Naive thymus-derived CD4-positive, alpha-beta T cell (primary cell): ENCODE measurements at regions of chr9 and their contacts with region 1.

Region 1: GRCh38 chr9:101727612-101728524 is 10.6 kb downstream of the GRIN3A start:
- DNase-seq: peak in 4 of 9 donors; percentile 2 to 29 (median 16)
- ATAC-seq: no peak
- H3K4me3 ChIP-seq: no peak overlapping the region
- H3K4me3 Mint-ChIP-seq: no peak overlapping the region
- H3K27ac ChIP-seq: no peak overlapping the region
- H3K27ac Mint-ChIP-seq: no peak overlapping the region
- H3K4me1 ChIP-seq: no peaks in the 10 kb centered on the region
- H3K4me1 Mint-ChIP-seq: no peaks in the 10 kb centered on the region
- H3K27me3 ChIP-seq: no peaks in the 10 kb centered on the region
- H3K27me3 Mint-ChIP-seq: peaks cover 4 to 22% (median 11%) of the 10 kb centered on the region in 5 donors

Region 2: DNA sequence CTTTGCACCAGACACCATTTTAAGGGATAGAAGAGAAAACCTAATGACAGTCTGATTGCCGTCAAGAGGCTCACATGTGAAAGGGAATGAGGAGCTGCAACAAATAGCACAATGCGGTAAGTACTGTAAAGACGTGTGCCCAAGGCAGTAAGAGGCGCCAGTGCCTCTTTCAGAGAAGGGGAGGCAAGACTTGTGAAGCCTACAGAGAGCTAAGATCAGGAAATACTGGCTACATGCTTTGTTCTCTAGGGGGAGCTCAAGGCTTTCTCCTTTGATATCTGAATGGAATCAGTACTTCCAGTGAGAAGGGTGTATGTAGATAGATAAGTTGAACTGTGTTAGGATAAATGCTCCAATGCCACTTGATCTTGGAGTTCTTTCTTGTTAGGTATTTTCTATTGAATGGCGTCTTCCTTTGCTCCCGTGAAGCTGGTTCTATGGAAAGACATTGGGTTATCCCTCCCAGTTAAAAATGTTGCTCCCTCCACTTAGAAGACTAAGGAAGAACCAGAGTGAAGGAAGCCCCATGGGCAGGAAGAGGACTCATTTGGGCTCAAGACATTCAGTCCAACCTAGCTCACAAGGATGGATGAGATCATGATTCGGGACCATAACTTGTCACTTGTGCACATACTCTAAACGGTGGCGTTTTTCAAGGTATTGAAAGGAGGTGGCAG is 268.8 kb before region 1 on chr9:
- CTCF ChIA-PET with region 1: no interaction called
- POLR2A ChIA-PET with region 1: no interaction called
- intact Hi-C with region 1: loop called in 1 of 2 experiments (anchors 1 kb)
- DNase-seq: peak in 7 of 9 donors; percentile 9 to 49 (median 27)
- ATAC-seq: peak; percentile 84
- H3K4me3 ChIP-seq: no peak overlapping the region
- H3K4me3 Mint-ChIP-seq: no peak overlapping the region
- H3K27ac ChIP-seq: no peak overlapping the region
- H3K27ac Mint-ChIP-seq: no peak overlapping the region
- H3K4me1 ChIP-seq: no peaks in the 10 kb centered on the region
- H3K4me1 Mint-ChIP-seq: peaks cover 0 to 2% (median 0%) of the 10 kb centered on the region in 7 donors
- H3K27me3 ChIP-seq: no peaks in the 10 kb centered on the region
- H3K27me3 Mint-ChIP-seq: peaks cover 8 to 26% (median 17%) of the 10 kb centered on the region in 5 donors

Region 3: DNA sequence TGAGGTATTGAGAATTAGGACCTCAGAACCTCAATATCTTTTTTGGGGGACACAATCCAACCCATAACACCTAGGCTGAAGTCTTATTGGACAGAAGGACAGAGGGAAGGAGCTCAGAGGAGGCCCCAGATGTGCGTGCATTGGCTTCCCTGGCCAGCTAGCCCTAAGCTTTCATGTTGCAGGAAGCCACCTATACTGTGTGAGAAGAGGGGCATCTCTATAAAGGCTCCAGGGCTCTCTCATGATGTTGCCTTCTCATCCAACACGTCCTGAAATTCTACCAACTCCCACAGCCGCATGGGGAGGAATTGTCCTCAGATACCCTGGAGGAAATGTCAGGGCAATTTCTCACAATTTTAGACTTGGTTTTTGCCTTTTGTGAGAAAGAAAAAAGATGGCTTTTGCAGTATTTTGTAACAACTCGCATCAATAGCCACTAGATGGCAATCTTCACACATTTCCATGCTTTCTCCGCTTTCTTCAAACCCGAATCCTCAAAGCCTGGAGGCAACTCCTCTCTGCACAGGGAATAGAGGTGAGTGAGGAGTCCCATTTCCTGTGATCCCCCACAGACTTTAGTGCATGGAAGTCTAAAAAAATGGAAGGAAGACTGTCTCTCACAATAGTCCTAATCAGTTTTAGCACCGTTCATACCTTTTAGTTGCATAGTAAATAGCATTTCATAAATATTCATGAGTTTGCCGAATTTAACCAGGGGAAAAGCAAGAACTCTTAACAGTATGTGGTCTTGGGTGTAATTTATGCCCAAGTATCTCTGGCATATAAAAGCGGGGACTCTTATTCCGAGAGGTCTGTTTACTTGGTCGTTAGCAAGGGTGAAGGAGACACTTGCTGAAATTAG is 125.7 kb before region 1 on chr9:
- CTCF ChIA-PET with region 1: interaction called, 5 read pairs
- POLR2A ChIA-PET with region 1: no interaction called
- intact Hi-C with region 1: loop called (anchors 1 to 2 kb)
- DNase-seq: peak in 7 of 9 donors; percentile 11 to 45 (median 40)
- ATAC-seq: peak; percentile 66
- H3K4me3 ChIP-seq: no peak overlapping the region
- H3K4me3 Mint-ChIP-seq: peak overlapping the region in 7 of 10 donors; percentile 26 to 78 (median 68)
- H3K27ac ChIP-seq: no peak overlapping the region
- H3K27ac Mint-ChIP-seq: peak overlapping the region in 1 of 9 donors; percentile 80
- H3K4me1 ChIP-seq: no peaks in the 10 kb centered on the region
- H3K4me1 Mint-ChIP-seq: peaks cover 0 to 6% (median 4%) of the 10 kb centered on the region in 7 donors
- H3K27me3 ChIP-seq: no peaks in the 10 kb centered on the region
- H3K27me3 Mint-ChIP-seq: peaks cover 0 to 17% (median 4%) of the 10 kb centered on the region in 5 donors

Region 4: GRCh38 chr9:101705135-101705661 is 22.7 kb before region 1 on chr9:
- CTCF ChIA-PET with region 1: interaction called, 3 read pairs
- POLR2A ChIA-PET with region 1: no interaction called
- intact Hi-C with region 1: loop called in 1 of 2 experiments (anchors 1 kb)
- DNase-seq: peak in 6 of 9 donors; percentile 11 to 42 (median 35)
- ATAC-seq: peak; percentile 90
- H3K4me3 ChIP-seq: peak overlapping the region; percentile 49
- H3K4me3 Mint-ChIP-seq: peak overlapping the region; percentile 68 to 93 (median 86)
- H3K27ac ChIP-seq: no peak overlapping the region
- H3K27ac Mint-ChIP-seq: peak overlapping the region in 6 of 9 donors; percentile 9 to 78 (median 64)
- H3K4me1 ChIP-seq: peaks cover 0 to 3% of the 10 kb centered on the region in 2 donors
- H3K4me1 Mint-ChIP-seq: peaks cover 5 to 26% (median 13%) of the 10 kb centered on the region in 7 donors
- H3K27me3 ChIP-seq: no peaks in the 10 kb centered on the region
- H3K27me3 Mint-ChIP-seq: peaks cover 0 to 19% (median 10%) of the 10 kb centered on the region in 5 donors

Region 5: DNA sequence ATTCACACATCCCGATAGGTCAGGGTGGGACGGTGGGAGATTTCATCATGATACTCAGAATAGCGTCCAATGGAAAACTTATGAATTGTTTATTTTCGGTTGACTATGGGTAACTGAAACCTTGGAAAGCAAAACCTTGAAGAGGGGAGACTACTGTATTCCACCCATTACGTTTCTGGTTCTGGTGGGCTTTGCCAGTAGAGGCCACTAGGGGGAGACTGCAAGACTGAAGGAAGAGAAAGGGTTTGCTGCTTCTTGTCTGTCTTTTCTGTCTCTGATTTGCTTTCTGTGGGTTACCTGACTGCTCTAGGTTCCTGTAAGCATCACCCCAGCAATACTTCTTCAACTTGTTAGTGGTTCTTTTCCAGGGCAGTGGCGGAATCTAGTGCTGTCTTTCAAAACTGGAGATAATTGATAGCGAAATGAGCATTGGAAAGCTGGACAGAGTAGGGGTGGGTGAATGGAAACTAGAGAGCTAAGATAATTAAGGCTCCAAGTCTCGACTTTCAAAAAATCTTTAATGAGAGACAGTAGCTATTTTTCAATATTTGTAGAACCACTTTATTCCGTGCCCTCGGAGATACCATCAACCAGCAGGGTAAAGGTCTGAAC is 16.4 kb before region 1 on chr9:
- CTCF ChIA-PET with region 1: interaction called, 10 read pairs
- POLR2A ChIA-PET with region 1: no interaction called
- intact Hi-C with region 1: no loop called
- DNase-seq: peak in 3 of 9 donors; percentile 8 to 19 (median 17)
- ATAC-seq: no peak
- H3K4me3 ChIP-seq: no peak overlapping the region
- H3K4me3 Mint-ChIP-seq: no peak overlapping the region
- H3K27ac ChIP-seq: no peak overlapping the region
- H3K27ac Mint-ChIP-seq: no peak overlapping the region
- H3K4me1 ChIP-seq: no peaks in the 10 kb centered on the region
- H3K4me1 Mint-ChIP-seq: peaks cover 0 to 5% (median 0%) of the 10 kb centered on the region in 7 donors
- H3K27me3 ChIP-seq: no peaks in the 10 kb centered on the region
- H3K27me3 Mint-ChIP-seq: peaks cover 4 to 29% (median 22%) of the 10 kb centered on the region in 5 donors

Region 6: DNA sequence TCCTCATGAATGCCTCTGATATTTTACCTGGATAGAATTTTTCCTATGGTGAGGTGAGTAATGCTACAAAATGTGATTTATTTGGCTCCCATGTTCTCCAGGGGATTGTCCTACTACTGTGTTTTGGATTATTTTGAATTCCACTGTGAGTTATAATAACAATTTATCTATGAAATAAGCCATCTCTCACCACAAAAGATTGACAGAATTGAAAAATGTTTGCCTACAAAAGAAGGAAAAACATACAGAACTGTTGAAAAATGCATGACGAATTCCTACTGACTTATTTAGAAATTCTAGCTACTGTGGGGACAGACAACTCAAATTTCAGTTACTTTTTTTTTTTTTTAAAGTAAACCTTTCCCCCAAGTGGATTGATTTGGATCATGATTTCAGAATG is 474.3 kb after region 1 on chr9:
- CTCF ChIA-PET with region 1: no interaction called
- POLR2A ChIA-PET with region 1: no interaction called
- intact Hi-C with region 1: no loop called
- DNase-seq: no peak
- ATAC-seq: no peak
- H3K4me3 ChIP-seq: no peak overlapping the region
- H3K4me3 Mint-ChIP-seq: no peak overlapping the region
- H3K27ac ChIP-seq: no peak overlapping the region
- H3K27ac Mint-ChIP-seq: no peak overlapping the region
- H3K4me1 ChIP-seq: no peaks in the 10 kb centered on the region
- H3K4me1 Mint-ChIP-seq: no peaks in the 10 kb centered on the region
- H3K27me3 ChIP-seq: no peaks in the 10 kb centered on the region
- H3K27me3 Mint-ChIP-seq: no peaks in the 10 kb centered on the region